Mammary epithelial cell (primary cell): ENCODE measurements at regions of chr17 and their contacts with region 1.

Region 1: GRCh38 chr17:2613089-2613808 is 19.8 kb downstream of the PAFAH1B1 start:
- DNase-seq: no peak
- H3K4me3 ChIP-seq: no peak overlapping the region
- H3K27ac ChIP-seq: no peak overlapping the region
- H3K4me1 ChIP-seq: no peaks in the 10 kb centered on the region
- H3K27me3 ChIP-seq: no peaks in the 10 kb centered on the region
- CTCF ChIP-seq: no peak

Region 2: GRCh38 chr17:2564878-2565277 is 48.4 kb before region 1 on chr17:
- CTCF ChIA-PET with region 1: no interaction called
- dilution Hi-C with region 1: no loop called
- in situ Hi-C with region 1: no loop called
- intact Hi-C with region 1: no loop called
- DNase-seq: peak; percentile 82
- H3K4me3 ChIP-seq: no peak overlapping the region
- H3K27ac ChIP-seq: peak overlapping the region; percentile 80
- H3K4me1 ChIP-seq: peaks cover 27% of the 10 kb centered on the region
- H3K27me3 ChIP-seq: no peaks in the 10 kb centered on the region
- CTCF ChIP-seq: no peak

Region 3: DNA sequence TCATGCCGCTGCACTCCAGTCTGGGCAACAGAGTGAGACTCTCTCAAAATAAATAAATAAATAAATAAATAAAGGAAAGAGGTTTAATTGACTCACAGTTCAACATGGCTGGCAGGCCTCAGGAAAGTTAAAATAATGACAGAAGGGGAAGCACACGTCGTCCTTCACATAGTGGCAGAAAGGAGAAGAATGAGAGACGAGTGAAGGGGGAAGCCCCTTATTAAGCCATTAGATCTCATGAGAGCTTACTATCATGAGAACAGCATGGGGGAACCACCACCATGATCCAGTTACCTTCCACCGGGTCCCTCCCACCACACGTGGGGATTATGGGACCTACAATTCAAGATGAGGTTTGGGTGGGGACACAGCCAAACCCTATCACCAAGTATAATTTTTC is 34.7 kb after region 1 on chr17:
- CTCF ChIA-PET with region 1: no interaction called
- dilution Hi-C with region 1: no loop called
- in situ Hi-C with region 1: no loop called
- intact Hi-C with region 1: no loop called
- DNase-seq: no peak
- H3K4me3 ChIP-seq: no peak overlapping the region
- H3K27ac ChIP-seq: no peak overlapping the region
- H3K4me1 ChIP-seq: peaks cover 4% of the 10 kb centered on the region
- H3K27me3 ChIP-seq: no peaks in the 10 kb centered on the region
- CTCF ChIP-seq: no peak

Region 4: DNA sequence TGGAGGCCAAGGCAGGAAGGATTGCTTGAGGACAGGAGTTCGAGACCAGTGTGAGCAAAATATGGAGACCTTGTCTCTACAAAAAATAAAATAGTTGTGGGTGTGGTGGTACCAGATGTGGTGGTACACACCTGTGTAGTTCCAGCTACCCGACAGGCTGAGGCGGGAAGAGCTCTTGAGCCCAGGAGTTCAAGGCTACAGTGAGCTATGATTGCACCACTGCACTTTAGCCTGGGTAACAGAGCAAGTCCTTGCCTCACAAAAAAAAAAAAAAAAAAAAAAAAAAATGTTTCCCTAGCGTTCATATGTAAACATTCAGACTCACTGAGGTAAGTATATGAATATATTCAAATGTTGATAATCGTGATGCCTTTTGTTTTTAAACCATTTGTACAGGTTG is 58.8 kb after region 1 on chr17:
- CTCF ChIA-PET with region 1: no interaction called
- dilution Hi-C with region 1: loop called (anchors 5 kb)
- in situ Hi-C with region 1: no loop called
- intact Hi-C with region 1: no loop called
- DNase-seq: no peak
- H3K4me3 ChIP-seq: no peak overlapping the region
- H3K27ac ChIP-seq: no peak overlapping the region
- H3K4me1 ChIP-seq: no peaks in the 10 kb centered on the region
- H3K27me3 ChIP-seq: no peaks in the 10 kb centered on the region
- CTCF ChIP-seq: no peak